WTC11 (cell line): ENCODE measurements at regions of chr4 and their contacts with region 1.

Region 1: GRCh38 chr4:42519803-42520417 is 122.6 kb downstream of the SHISA3 start:
- DNase-seq: peak; percentile 36
- ATAC-seq: peak; percentile 43; the same call in 1 of the 2 replicates
- H3K4me3 Mint-ChIP-seq: no peak overlapping the region
- H3K27ac Mint-ChIP-seq: no peak overlapping the region
- H3K4me1 Mint-ChIP-seq: peaks cover 28% of the 10 kb centered on the region
- H3K27me3 Mint-ChIP-seq: peaks cover 14% of the 10 kb centered on the region
- CTCF ChIP-seq: peak; percentile 65

Region 2: DNA sequence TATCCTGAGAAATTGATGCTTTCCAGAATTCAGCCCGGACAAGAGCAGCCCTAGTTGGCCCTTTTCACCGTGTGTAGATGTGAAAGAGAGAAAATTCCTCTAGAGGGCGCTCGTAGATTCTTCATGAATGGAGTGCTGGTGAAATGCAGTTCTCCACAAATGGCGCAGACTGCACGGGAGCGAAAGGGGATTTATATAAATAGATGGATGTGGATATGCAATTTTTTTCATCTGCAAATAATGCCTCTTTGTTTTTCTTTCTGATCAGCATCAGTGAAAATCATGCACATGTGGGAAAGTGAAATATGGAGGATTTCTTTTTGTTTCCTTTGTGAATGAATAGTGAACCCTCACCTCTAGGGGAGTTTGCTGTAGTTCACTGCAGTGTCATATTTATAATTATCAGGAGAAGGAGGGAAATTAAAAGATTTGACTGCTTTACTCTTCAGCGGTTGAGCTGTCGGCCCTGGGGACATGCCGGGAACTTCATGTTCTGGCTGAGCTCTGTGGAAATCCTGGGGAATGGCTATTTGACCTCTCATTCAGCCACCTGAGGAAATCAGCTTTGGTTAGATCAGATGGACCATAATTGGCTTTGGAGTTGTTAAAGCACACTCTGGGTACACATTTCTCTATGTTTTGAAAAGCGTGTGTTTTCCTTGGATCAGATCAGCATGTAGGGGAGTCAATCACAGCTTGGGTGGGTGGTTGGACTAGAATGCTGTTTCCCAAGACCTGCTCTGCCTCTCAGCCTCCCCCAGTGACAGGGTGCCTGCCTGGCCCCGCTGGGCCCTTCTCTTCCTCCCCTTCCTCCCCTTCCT is 237.6 kb before region 1 on chr4:
- CTCF ChIA-PET with region 1: interaction called, 28 read pairs
- POLR2A ChIA-PET with region 1: no interaction called
- DNase-seq: peak; percentile 41
- ATAC-seq: peak; percentile 83
- H3K4me3 Mint-ChIP-seq: peak overlapping the region; percentile 9; the same call in 1 of the 2 replicates
- H3K27ac Mint-ChIP-seq: no peak overlapping the region
- H3K4me1 Mint-ChIP-seq: peaks cover 34% of the 10 kb centered on the region
- H3K27me3 Mint-ChIP-seq: peaks cover 3% of the 10 kb centered on the region; the same call in 1 of the 2 replicates
- CTCF ChIP-seq: peak; percentile 69

Region 3: GRCh38 chr4:42371306-42372252 is 148.3 kb before region 1 on chr4:
- CTCF ChIA-PET with region 1: interaction called, 30 read pairs
- POLR2A ChIA-PET with region 1: no interaction called
- DNase-seq: no peak
- ATAC-seq: peak; percentile 36; the same call in 1 of the 2 replicates
- H3K4me3 Mint-ChIP-seq: no peak overlapping the region
- H3K27ac Mint-ChIP-seq: no peak overlapping the region
- H3K4me1 Mint-ChIP-seq: peaks cover 5% of the 10 kb centered on the region
- H3K27me3 Mint-ChIP-seq: no peaks in the 10 kb centered on the region; the same call in 1 of the 2 replicates
- CTCF ChIP-seq: no peak

Region 4: DNA sequence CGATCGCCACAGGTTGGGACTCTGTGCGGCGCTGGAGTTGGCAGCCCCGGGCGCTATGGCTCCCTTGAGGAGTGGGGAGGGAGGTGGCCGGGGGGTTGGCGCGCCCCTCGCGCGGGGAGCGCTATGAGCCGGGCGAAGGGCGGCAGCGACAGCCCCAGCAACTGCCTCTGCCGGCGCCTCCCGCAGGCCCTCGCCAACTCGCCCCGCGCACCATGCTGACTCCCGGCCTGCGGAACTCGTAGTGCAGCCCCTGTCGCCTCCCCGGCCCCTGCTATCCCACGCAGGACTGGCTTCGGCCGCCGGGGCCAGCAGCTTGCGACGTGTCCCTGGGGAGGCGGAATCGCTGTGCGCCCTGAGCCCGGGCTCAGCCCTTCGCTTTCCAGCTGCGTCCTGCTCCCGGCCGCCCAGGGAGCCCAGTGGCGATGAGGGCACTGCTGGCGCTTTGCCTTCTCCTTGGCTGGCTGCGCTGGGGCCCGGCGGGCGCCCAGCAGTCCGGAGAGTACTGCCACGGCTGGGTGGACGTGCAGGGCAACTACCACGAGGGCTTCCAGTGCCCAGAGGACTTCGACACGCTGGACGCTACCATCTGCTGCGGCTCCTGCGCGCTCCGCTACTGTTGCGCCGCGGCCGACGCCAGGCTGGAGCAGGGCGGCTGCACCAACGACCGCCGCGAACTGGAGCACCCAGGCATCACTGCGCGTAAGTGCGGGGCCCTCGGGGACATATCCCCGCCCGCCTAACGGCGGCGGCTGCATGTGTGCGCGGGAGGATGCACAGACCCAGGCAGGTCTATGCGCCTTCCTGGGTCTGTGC is 122.1 kb before region 1 on chr4:
- CTCF ChIA-PET with region 1: interaction called, 66 read pairs
- POLR2A ChIA-PET with region 1: no interaction called
- DNase-seq: no peak
- ATAC-seq: peak; percentile 27
- H3K4me3 Mint-ChIP-seq: peak overlapping the region; percentile 82
- H3K27ac Mint-ChIP-seq: no peak overlapping the region
- H3K4me1 Mint-ChIP-seq: peaks cover 55% of the 10 kb centered on the region
- H3K27me3 Mint-ChIP-seq: peaks cover 74% of the 10 kb centered on the region
- CTCF ChIP-seq: no peak

Region 5: GRCh38 chr4:42501624-42502401 is 18.1 kb before region 1 on chr4:
- CTCF ChIA-PET with region 1: interaction called, 11 read pairs
- POLR2A ChIA-PET with region 1: no interaction called
- DNase-seq: no peak
- ATAC-seq: peak; percentile 96
- H3K4me3 Mint-ChIP-seq: no peak overlapping the region
- H3K27ac Mint-ChIP-seq: peak overlapping the region; percentile 71
- H3K4me1 Mint-ChIP-seq: peaks cover 36% of the 10 kb centered on the region
- H3K27me3 Mint-ChIP-seq: no peaks in the 10 kb centered on the region
- CTCF ChIP-seq: no peak

Region 6: GRCh38 chr4:42531341-42532030 is 11.6 kb after region 1 on chr4:
- CTCF ChIA-PET with region 1: no interaction called
- POLR2A ChIA-PET with region 1: no interaction called
- DNase-seq: no peak
- ATAC-seq: no peak
- H3K4me3 Mint-ChIP-seq: no peak overlapping the region
- H3K27ac Mint-ChIP-seq: no peak overlapping the region
- H3K4me1 Mint-ChIP-seq: peaks cover 3% of the 10 kb centered on the region; the same call in 1 of the 2 replicates
- H3K27me3 Mint-ChIP-seq: no peaks in the 10 kb centered on the region
- CTCF ChIP-seq: no peak